ENCODE measurements at regions of chr6 and their contacts with region 1.

Region 1: GRCh38 chr6:24494821-24495795 is at the start of gene ALDH5A1:
- DNase-seq: peak; percentile 63 to 89 (median 78)
- ATAC-seq: peak; percentile 82
- H3K4me3 ChIP-seq: peak within 1 kb of the TSS; percentile 63
- H3K4me3 Mint-ChIP-seq: peak within 1 kb of the TSS; percentile 93
- H3K27ac ChIP-seq: peak within 1 kb of the TSS in 1 of 2 donors; percentile 14
- H3K27ac Mint-ChIP-seq: peak within 1 kb of the TSS; percentile 57
- H3K4me1 ChIP-seq: peaks cover 16% of the 10 kb centered on the region
- H3K4me1 Mint-ChIP-seq: peaks cover 38% of the 10 kb centered on the region
- H3K27me3 ChIP-seq: no peaks in the 10 kb centered on the region
- H3K27me3 Mint-ChIP-seq: no peaks in the 10 kb centered on the region
- CTCF ChIP-seq: no peak
- total RNA-seq, gene ALDH5A1: 3.6 to 5.0 TPM

Region 2: DNA sequence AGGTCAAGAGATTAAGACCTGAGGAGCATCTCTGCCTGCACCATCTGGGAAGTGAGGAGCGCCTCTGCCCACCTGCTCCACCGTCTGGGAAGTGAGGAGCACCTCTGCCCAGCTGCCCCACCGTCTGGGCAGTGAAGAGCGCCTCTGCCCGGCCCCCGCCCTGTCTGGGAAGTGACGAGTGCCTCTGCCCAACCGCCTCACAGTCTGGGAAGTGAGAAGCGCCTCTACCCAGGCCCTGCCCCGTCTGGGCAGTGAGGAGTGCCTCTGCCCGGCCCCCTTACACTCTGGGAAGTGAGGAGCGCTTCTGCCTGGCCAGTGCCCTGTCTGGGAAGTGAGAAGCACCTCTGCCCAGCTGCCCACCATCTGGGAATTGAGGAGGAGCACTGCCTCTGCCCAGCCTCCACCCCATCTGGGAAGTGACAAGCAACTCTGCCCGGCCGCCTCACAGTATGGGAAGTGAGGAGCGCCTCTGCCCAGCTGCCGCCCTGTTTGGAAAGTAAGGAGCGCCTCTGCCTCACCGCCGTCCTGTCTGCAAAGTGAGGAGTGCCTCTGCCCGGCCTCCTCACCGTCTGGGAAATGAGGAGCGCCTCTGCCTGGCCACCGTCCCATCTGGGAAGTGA is 639.5 kb before region 1 on chr6:
- CTCF ChIA-PET with region 1: no interaction called
- POLR2A ChIA-PET with region 1: no interaction called
- intact Hi-C with region 1: no loop called
- DNase-seq: no peak
- ATAC-seq: no peak
- H3K4me3 ChIP-seq: no peak overlapping the region
- H3K4me3 Mint-ChIP-seq: no peak overlapping the region
- H3K27ac ChIP-seq: no peak overlapping the region
- H3K27ac Mint-ChIP-seq: no peak overlapping the region
- H3K4me1 ChIP-seq: no peaks in the 10 kb centered on the region
- H3K4me1 Mint-ChIP-seq: no peaks in the 10 kb centered on the region
- H3K27me3 ChIP-seq: no peaks in the 10 kb centered on the region
- H3K27me3 Mint-ChIP-seq: no peaks in the 10 kb centered on the region
- CTCF ChIP-seq: no peak

Region 3: GRCh38 chr6:24458134-24458533 is 37.0 kb before region 1 on chr6:
- CTCF ChIA-PET with region 1: no interaction called
- POLR2A ChIA-PET with region 1: no interaction called
- intact Hi-C with region 1: no loop called
- DNase-seq: no peak
- ATAC-seq: no peak
- H3K4me3 ChIP-seq: no peak overlapping the region
- H3K4me3 Mint-ChIP-seq: no peak overlapping the region
- H3K27ac ChIP-seq: no peak overlapping the region
- H3K27ac Mint-ChIP-seq: no peak overlapping the region
- H3K4me1 ChIP-seq: no peaks in the 10 kb centered on the region
- H3K4me1 Mint-ChIP-seq: no peaks in the 10 kb centered on the region
- H3K27me3 ChIP-seq: no peaks in the 10 kb centered on the region
- H3K27me3 Mint-ChIP-seq: no peaks in the 10 kb centered on the region
- CTCF ChIP-seq: no peak

Region 4: DNA sequence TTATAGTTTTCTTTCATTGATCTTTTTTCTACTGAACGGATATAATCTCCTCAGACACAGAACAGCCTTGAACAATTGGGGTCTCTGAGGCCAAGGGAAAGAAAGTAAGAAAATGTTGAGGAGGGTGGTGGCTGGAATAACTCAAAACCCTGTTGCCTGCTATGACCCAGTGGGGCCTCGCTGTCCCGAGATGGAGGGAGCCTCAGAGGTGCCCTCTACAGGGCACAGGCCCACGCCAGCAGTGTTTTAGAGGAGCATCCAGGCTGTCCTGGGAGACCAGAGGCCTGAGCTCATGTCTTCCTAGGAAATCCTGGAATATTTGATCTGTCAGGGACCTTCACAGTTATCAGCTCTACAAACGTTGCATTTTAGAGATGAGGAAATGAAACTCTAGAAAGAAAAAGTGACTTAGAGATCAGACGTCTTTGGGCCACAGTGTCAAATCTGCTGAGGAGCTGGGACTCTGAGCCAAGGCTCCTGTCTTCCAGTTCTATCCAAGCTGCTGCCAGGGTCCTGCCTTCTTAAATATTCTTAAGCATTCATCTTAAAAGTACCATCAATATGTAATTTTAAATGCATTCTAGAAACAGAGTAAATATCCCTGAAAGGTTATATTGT is 25.9 kb after region 1 on chr6:
- CTCF ChIA-PET with region 1: interaction called, 15 read pairs
- POLR2A ChIA-PET with region 1: interaction called, 6 read pairs
- intact Hi-C with region 1: no loop called
- DNase-seq: peak in 11 of 14 experiments; percentile 7 to 54 (median 33)
- ATAC-seq: peak; percentile 43
- H3K4me3 ChIP-seq: no peak overlapping the region
- H3K4me3 Mint-ChIP-seq: no peak overlapping the region
- H3K27ac ChIP-seq: no peak overlapping the region
- H3K27ac Mint-ChIP-seq: no peak overlapping the region
- H3K4me1 ChIP-seq: no peaks in the 10 kb centered on the region
- H3K4me1 Mint-ChIP-seq: no peaks in the 10 kb centered on the region
- H3K27me3 ChIP-seq: no peaks in the 10 kb centered on the region
- H3K27me3 Mint-ChIP-seq: no peaks in the 10 kb centered on the region
- CTCF ChIP-seq: peak; percentile 59

Region 5: GRCh38 chr6:24660105-24660504 is 165.0 kb after region 1 on chr6:
- CTCF ChIA-PET with region 1: no interaction called
- POLR2A ChIA-PET with region 1: no interaction called
- intact Hi-C with region 1: loop called in 1 of 2 experiments (anchors 5 kb)
- DNase-seq: no peak
- ATAC-seq: no peak
- H3K4me3 ChIP-seq: no peak overlapping the region
- H3K4me3 Mint-ChIP-seq: no peak overlapping the region
- H3K27ac ChIP-seq: no peak overlapping the region
- H3K27ac Mint-ChIP-seq: peak overlapping the region; percentile 37
- H3K4me1 ChIP-seq: peaks cover 11% of the 10 kb centered on the region
- H3K4me1 Mint-ChIP-seq: peaks cover 74% of the 10 kb centered on the region
- H3K27me3 ChIP-seq: no peaks in the 10 kb centered on the region
- H3K27me3 Mint-ChIP-seq: no peaks in the 10 kb centered on the region
- CTCF ChIP-seq: no peak

Region 6: GRCh38 chr6:24666641-24667377 is 171.7 kb after region 1 on chr6 and contains the starts of genes ACOT13 and TDP2:
- CTCF ChIA-PET with region 1: interaction called, 6 read pairs
- POLR2A ChIA-PET with region 1: interaction called, 21 read pairs
- intact Hi-C with region 1: loop called in 1 of 2 experiments (anchors 5 kb)
- DNase-seq: peak; percentile 92 to 99 (median 95)
- ATAC-seq: peak; percentile 92
- H3K4me3 ChIP-seq: peak within 1 kb of the TSS; percentile 96
- H3K4me3 Mint-ChIP-seq: peak within 1 kb of the TSS; percentile 100
- H3K27ac ChIP-seq: peak within 1 kb of the TSS; percentile 78 to 83
- H3K27ac Mint-ChIP-seq: peak within 1 kb of the TSS; percentile 97
- H3K4me1 ChIP-seq: peaks cover 33% of the 10 kb centered on the region
- H3K4me1 Mint-ChIP-seq: peaks cover 45% of the 10 kb centered on the region
- H3K27me3 ChIP-seq: no peaks in the 10 kb centered on the region
- H3K27me3 Mint-ChIP-seq: no peaks in the 10 kb centered on the region
- CTCF ChIP-seq: peak; percentile 39
- total RNA-seq, gene ACOT13: 1.5 TPM
- total RNA-seq, gene TDP2: 63.9 to 64.6 TPM

Region 7: DNA sequence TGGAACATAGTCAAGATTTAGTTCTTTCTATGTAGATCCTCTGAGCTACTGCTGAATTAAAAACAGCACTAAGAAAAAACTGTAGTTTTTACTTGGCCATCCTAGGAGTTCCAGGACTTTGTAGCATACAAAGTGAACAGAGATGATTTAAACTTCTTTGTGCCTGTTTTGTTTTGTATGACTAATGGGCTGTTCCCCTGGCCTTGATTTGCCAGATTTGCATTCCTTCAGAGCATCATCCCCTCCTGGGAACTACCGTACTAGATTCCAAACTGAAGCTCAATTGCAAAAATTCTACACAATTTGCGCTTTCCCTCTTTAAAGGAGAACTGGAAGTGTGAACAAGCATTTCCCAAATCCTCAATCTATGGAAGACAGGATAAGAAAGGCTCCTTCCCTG is 194.9 kb after region 1 on chr6:
- CTCF ChIA-PET with region 1: no interaction called
- POLR2A ChIA-PET with region 1: no interaction called
- intact Hi-C with region 1: loop called in 1 of 2 experiments (anchors 10 kb)
- DNase-seq: no peak
- ATAC-seq: no peak
- H3K4me3 ChIP-seq: no peak overlapping the region
- H3K4me3 Mint-ChIP-seq: no peak overlapping the region
- H3K27ac ChIP-seq: no peak overlapping the region
- H3K27ac Mint-ChIP-seq: no peak overlapping the region
- H3K4me1 ChIP-seq: no peaks in the 10 kb centered on the region
- H3K4me1 Mint-ChIP-seq: peaks cover 15% of the 10 kb centered on the region
- H3K27me3 ChIP-seq: no peaks in the 10 kb centered on the region
- H3K27me3 Mint-ChIP-seq: no peaks in the 10 kb centered on the region
- CTCF ChIP-seq: no peak

Region 8: DNA sequence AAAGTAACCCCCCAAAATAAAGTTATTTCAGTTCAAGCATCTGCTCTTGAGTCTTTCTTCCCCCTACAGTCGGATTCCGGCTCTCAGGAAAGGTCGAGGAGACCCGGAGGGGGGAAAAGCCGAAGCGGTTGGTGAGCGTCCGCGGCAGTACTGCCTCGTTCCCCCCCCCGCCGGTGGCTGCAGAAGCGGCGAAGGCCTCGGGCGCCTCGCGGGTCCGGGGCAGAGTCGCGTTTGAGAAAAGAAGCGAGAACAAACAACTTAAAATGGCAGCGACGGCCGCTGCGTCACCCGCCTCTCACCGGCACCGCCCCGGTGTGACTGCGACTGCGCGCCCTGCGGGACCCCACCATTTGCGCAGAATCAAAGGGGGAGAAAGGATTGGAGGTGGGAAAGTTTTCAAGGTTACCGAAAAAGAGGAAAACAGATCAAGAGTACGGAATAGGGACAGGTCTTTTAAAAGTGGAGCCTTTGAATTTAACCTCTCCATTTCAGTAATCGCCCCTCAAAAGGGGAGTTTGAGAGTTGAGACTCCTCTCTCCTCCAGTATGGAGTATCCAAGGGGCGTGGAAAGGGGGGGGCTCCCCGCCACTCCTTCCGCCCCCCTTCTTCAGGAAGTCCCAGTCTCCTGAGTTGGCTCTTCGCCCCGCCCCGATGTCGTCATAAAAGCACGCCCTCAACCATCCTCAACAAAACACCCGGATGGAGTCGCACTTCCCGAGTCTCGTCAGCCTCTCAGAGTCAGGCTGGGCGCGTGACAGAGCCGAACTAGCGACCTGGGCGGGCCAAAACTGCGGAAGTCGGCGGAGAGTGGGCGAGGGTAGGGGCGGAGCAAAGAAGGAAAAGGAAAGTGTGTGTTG is 225.7 kb after region 1 on chr6:
- CTCF ChIA-PET with region 1: no interaction called
- POLR2A ChIA-PET with region 1: interaction called, 11 read pairs
- intact Hi-C with region 1: no loop called
- DNase-seq: peak; percentile 99 to 100 (median 100)
- ATAC-seq: peak; percentile 84
- H3K4me3 ChIP-seq: peak overlapping the region; percentile 98
- H3K4me3 Mint-ChIP-seq: peak overlapping the region; percentile 92
- H3K27ac ChIP-seq: peak overlapping the region; percentile 100
- H3K27ac Mint-ChIP-seq: peak overlapping the region; percentile 94
- H3K4me1 ChIP-seq: peaks cover 25% of the 10 kb centered on the region
- H3K4me1 Mint-ChIP-seq: peaks cover 51% of the 10 kb centered on the region
- H3K27me3 ChIP-seq: no peaks in the 10 kb centered on the region
- H3K27me3 Mint-ChIP-seq: no peaks in the 10 kb centered on the region
- CTCF ChIP-seq: no peak